ENCODE measurements at regions of chr12 and their contacts with region 1.

Region 1: DNA sequence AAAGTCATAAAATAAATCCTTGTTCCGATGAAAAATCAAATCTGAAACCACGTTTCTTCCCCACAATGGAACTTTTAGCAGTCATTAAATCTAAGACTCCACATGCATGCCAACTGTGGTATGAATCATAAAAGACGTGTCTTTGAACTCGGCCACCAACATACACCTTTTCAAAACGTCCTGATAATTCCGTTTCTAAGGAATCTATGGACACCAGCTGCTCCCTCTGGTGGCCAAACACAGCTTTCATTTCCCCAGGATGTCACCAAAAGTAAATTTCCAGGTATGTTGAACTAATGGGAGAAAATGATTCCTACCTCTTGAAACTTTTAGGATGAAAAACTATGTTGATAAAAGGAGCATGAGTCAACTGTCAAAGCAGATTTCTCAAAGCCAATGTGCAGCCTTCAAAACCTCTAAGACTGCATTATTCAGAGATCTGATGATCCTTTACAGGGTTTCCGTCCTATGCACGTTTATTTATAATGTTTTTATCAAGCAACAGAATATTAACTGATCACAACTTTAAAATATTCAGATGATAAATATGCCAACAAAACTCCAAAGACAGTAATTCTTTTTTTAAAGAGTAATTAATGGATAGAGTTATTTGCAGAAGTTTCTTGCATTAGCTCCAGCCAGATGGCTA is 96.2 kb downstream of the CIT start:
- DNase-seq: peak in 2 of 3 donors; percentile 48 to 84
- ATAC-seq: peak; percentile 86
- H3K4me3 ChIP-seq: no peak overlapping the region
- H3K4me1 ChIP-seq: no peaks in the 10 kb centered on the region
- CTCF ChIP-seq: peak; percentile 57

Region 2: GRCh38 chr12:119659289-119659897 is 121.5 kb before region 1 on chr12:
- intact Hi-C with region 1: loop called in 1 of 2 experiments (anchors 10 kb)
- DNase-seq: peak in 1 of 3 donors; percentile 70
- ATAC-seq: peak; percentile 59
- H3K4me3 ChIP-seq: no peak overlapping the region
- H3K4me1 ChIP-seq: no peaks in the 10 kb centered on the region
- CTCF ChIP-seq: peak; percentile 86

Measured in mucosa of descending colon (tissue), 3 donors.